Common myeloid progenitor, CD34-positive (primary cell): ENCODE measurements at regions of chr1 and their contacts with region 1.

Region 1: GRCh38 chr1:77590651-77591050 is 91.8 kb downstream of the ZZZ3 start:
- DNase-seq: peak in 1 of 3 donors; percentile 21
- H3K4me3 ChIP-seq: no peak overlapping the region
- H3K27ac ChIP-seq: no peak overlapping the region
- H3K4me1 ChIP-seq: no peaks in the 10 kb centered on the region
- H3K27me3 ChIP-seq: no peaks in the 10 kb centered on the region

Region 2: GRCh38 chr1:76294482-76295194 is 1296.0 kb before region 1 on chr1:
- CTCF ChIA-PET with region 1: no interaction called
- POLR2A ChIA-PET with region 1: no interaction called
- DNase-seq: no peak
- H3K4me3 ChIP-seq: no peak overlapping the region
- H3K27ac ChIP-seq: no peak overlapping the region
- H3K4me1 ChIP-seq: no peaks in the 10 kb centered on the region
- H3K27me3 ChIP-seq: no peaks in the 10 kb centered on the region

Region 3: DNA sequence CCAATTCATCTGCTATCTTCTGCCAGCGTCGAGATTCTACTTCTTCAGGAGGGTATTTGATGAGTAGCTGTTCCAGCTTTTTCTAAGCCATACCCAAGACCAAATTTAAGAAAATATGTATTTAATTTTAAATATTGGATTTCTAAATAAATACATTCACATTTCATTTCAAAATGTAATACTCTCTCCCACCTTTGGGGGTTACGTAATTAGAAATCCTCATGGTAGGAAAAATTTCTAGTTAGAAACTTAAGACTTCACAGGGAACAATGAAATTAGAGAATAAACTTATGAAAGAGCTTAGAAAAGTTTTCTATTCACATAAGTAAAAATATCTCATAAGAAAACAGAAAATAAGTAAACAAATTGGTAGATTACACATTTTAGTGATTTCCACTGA is 11.1 kb before region 1 on chr1:
- CTCF ChIA-PET with region 1: interaction called, 14 read pairs
- POLR2A ChIA-PET with region 1: no interaction called
- DNase-seq: peak in 2 of 3 donors; percentile 9
- H3K4me3 ChIP-seq: no peak overlapping the region
- H3K27ac ChIP-seq: no peak overlapping the region
- H3K4me1 ChIP-seq: no peaks in the 10 kb centered on the region
- H3K27me3 ChIP-seq: no peaks in the 10 kb centered on the region